ENCODE measurements at regions of chr5 and their contacts with region 1.

Region 1: DNA sequence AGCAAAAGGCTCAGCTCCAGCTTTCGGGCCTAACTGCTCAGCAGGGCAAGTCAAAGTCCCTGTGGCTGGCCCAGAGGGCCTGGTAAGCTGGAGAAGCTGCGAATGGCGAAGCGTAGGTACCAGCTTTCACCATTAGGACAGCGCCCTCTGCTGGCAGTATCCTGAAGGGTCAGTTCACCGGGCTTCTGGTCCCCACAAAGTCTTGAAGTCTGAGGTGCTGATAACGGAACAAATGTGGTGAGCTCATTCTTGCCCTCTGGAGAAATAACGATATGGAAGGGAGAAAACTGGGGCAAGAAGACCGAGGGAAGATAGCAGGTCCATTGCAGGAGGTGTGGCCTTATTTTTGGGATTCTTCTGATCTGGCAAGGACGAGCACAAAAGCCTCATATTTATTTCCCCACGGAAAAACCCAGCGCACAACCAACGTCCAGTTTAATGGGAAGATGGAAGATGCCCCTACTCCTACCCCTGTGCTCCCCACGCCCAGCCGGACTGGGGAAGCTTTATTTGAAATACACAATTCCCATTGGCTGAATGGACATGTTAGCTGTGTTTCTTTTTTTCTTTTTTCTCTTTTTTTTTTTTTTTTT is 7.2 kb downstream of the SOWAHA start:
- DNase-seq: peak; percentile 86 to 91
- H3K4me3 ChIP-seq: no peak overlapping the region
- H3K27ac ChIP-seq: peak overlapping the region in 1 of 2 donors; percentile 30
- H3K4me1 ChIP-seq: peaks cover 0 to 3% of the 10 kb centered on the region in 2 donors
- H3K27me3 ChIP-seq: no peaks in the 10 kb centered on the region
- CTCF ChIP-seq: peak; percentile 84 to 86 (median 84)
- POLR2A ChIP-seq: no peak

Region 2: DNA sequence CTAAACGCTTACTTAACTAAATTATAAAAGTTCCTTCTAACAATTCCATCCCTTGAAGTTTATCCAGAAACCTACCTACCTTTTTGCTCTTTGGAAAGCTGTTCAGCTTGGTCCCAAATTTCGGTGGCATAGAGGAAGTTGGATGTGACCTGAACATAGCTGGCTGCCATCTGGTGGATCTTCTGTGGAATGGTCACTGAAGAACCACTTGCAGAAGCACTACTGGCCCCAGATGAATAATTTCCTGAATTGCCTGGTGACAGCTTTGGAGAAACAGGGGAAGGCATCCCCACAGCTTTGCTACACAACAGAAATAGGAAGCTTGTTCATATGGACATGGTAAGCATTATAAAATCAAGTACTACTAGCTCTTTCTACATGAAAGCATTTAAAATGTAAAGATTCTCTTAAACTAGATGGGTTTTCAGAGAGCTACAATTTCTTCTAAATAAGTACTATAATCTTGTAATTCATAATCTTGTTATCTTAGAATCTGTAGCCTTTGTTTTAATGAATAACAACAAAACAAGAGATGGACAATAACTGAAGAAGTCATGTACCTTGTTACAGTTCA is 63.1 kb after region 1 on chr5:
- intact Hi-C with region 1: loop called (anchors 10 kb)
- DNase-seq: peak in 1 of 2 donors; percentile 45
- H3K4me3 ChIP-seq: no peak overlapping the region
- H3K27ac ChIP-seq: no peak overlapping the region
- H3K4me1 ChIP-seq: no peaks in the 10 kb centered on the region
- H3K27me3 ChIP-seq: no peaks in the 10 kb centered on the region
- CTCF ChIP-seq: peak; percentile 37 to 70 (median 60)
- POLR2A ChIP-seq: no peak

Measured in uterus (tissue), 4 donors.